PC-9 (cell line): ENCODE measurements at regions of chr2 and their contacts with region 1.

Region 1: DNA sequence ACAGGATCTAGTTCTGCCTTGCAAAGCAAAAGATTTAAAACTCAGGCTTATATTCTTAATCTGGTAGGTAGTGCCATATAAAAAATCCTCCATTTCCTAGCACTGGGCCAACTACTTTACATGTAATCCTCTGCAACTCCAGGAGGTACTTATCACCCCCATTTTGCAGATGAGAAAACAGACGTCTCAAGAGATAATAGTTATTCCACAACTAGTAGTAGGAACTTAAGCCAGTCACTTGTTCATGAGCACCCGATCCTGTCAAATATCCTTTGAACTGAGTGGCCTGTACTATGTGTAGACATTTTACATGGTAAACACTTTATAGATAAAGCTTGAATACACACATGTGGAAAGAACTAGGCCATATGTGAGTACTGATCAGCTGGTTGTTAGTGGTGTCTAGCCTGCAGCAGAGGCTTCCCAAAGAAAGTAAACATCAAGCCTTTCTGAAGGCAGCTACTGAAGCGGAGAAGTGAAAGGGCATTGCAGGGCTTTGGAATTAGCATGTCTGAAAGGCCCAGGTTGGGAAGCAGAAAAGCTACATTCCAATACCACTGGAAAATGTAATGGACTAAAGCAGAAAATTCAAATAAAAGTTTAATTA is 48.0 kb downstream of the NAB1 start:
- DNase-seq: no peak
- H3K4me3 ChIP-seq: no peak overlapping the region
- H3K27ac ChIP-seq: no peak overlapping the region
- H3K4me1 ChIP-seq: no peaks in the 10 kb centered on the region
- H3K27me3 ChIP-seq: no peaks in the 10 kb centered on the region
- CTCF ChIP-seq: no peak

Region 2: DNA sequence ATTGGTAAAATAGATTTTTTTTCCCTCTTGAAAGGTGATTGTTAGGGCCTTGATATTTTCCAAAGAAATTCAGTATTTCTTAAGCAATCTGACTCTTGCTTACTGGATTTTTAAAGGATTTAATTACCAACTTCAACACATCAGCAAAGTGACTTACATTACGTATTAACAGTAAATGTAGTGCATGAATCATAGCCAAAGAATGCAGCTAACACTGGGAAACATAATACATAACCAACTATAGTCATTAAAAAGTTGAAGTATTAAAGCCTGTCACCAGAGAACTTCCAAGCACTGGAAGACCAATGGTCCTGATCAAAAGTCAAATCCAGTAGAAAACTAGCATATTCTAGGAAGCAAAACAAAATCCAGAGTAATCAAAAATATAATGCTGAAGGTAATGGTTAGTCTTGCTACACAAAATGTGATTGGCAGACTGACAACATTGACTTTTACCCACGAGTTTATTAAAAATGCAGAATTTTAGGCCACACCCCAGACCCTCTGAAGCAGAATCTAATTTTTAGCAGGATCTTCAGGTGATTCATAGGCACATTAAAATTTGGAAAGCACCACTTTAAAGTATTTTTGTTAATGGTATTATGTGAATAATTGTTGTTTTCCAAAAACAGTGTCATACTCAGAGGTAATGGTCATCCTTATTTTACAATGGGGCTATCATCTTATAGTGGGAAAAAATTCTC is 1181.8 kb after region 1 on chr2:
- CTCF ChIA-PET with region 1: no interaction called
- POLR2A ChIA-PET with region 1: interaction called, 11 read pairs
- intact Hi-C with region 1: no loop called
- DNase-seq: peak in 1 of 2 experiments; percentile 68
- H3K4me3 ChIP-seq: no peak overlapping the region
- H3K27ac ChIP-seq: peak overlapping the region; percentile 33
- H3K4me1 ChIP-seq: 0 out of 2 replicates have a peak, but pooled peaks cover 8% of the 10 kb centered on the region
- H3K27me3 ChIP-seq: no peaks in the 10 kb centered on the region
- CTCF ChIP-seq: no peak